Upper lobe of right lung (tissue), 1 donor: ENCODE measurements at regions of chr4 and their contacts with region 1.

Region 1: DNA sequence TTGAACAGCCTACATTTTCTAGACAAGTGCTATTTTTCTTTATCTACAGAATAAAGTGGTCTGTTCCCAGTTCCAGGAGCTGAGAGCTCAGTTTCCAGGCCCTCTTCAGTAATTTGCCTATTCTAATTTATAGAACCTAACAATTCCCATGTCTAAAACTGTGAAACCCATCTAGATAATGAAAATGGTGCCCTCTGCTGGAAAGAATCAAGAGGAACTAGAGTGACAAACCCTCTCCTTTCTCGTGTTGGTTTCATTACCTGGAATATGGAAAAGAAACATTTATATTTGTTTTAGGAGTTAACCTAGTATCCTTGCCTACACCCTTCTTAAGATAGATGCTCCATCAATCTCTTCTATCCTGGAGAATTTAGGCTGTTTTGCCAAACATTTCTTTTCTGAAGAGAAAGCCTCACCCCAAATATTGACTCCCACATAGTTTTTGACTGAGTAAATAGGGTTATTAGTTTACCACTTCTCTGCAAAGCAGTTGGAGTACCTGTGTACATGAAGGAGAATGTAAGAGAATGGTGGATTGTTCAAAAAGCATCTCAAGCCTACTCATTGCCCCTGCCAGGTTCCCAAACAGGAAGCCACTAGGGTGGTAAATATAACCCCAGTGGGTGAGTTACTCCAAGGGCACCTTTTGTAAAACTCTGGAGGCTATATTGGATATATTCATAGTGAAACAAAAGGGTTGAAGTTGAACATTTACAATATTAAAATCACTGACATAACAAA is 121.6 kb downstream of the RASL11B start:
- DNase-seq: no peak
- ATAC-seq: peak; percentile 76
- H3K4me3 ChIP-seq: no peak overlapping the region
- H3K27ac ChIP-seq: no peak overlapping the region
- H3K4me1 ChIP-seq: peaks cover 12% of the 10 kb centered on the region
- H3K27me3 ChIP-seq: no peaks in the 10 kb centered on the region
- CTCF ChIP-seq: peak; percentile 75

Region 2: DNA sequence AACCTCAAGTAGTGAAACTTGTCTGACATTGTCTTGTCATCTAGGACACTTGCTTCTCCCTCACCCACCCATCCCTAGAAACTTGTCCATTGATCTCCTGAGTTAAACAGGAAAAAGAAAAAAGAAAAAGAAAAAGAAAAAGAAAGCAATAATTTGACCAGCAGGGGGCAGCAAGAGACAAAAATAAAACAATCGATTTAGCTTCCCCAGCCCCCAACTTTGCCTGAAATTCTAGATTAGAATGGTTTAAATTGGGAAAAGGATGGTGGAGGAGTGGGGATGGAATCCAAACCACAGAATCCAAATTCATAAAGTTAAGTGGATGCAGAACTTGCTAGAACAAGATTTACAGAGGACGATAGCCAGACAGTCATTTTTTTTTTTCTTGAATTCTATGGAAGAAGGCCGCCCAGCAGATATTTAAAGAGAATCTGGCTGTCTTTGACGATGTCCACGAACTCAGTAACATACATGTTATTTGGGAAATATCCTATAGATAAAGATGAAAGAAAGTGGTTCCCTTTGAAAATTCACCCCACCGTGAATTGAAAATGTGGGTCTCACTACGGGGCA is 607.5 kb before region 1 on chr4:
- intact Hi-C with region 1: loop called (anchors 10 kb)
- DNase-seq: no peak
- ATAC-seq: no peak
- H3K4me3 ChIP-seq: no peak overlapping the region
- H3K27ac ChIP-seq: no peak overlapping the region
- H3K4me1 ChIP-seq: no peaks in the 10 kb centered on the region
- H3K27me3 ChIP-seq: no peaks in the 10 kb centered on the region
- CTCF ChIP-seq: peak; percentile 59

Region 3: GRCh38 chr4:52545099-52546069 is 438.3 kb before region 1 on chr4:
- intact Hi-C with region 1: loop called (anchors 10 kb)
- DNase-seq: peak; percentile 75
- ATAC-seq: peak; percentile 98
- H3K4me3 ChIP-seq: no peak overlapping the region
- H3K27ac ChIP-seq: no peak overlapping the region
- H3K4me1 ChIP-seq: no peaks in the 10 kb centered on the region
- H3K27me3 ChIP-seq: no peaks in the 10 kb centered on the region
- CTCF ChIP-seq: peak; percentile 96